ENCODE measurements at regions of chr17 and their contacts with region 1.

Region 1: GRCh38 chr17:65231662-65232335 is 94.6 kb downstream of the RGS9 start:
- DNase-seq: peak; percentile 76 to 94
- ATAC-seq: peak; percentile 89 to 96
- H3K4me3 ChIP-seq: no peak overlapping the region
- H3K27ac ChIP-seq: no peak overlapping the region
- H3K4me1 ChIP-seq: no peaks in the 10 kb centered on the region
- CTCF ChIP-seq: peak; percentile 89
- EP300 ChIP-seq: no peak
- POLR2A ChIP-seq: no peak
- RAD21 ChIP-seq: peak; percentile 95 to 97

Region 2: GRCh38 chr17:65219124-65219523 is 12.7 kb before region 1 on chr17:
- CTCF ChIA-PET with region 1: interaction called, 77 read pairs
- POLR2A ChIA-PET with region 1: no interaction called
- DNase-seq: peak in 1 of 2 experiments; percentile 19
- ATAC-seq: peak in 1 of 2 experiments; percentile 55; a peak in 2 of 6 replicates
- H3K4me3 ChIP-seq: no peak overlapping the region
- H3K27ac ChIP-seq: no peak overlapping the region
- H3K4me1 ChIP-seq: 0 out of 3 replicates have a peak, but pooled peaks cover 2% of the 10 kb centered on the region
- CTCF ChIP-seq: peak; percentile 20; the same call in 2 of the 3 replicates
- EP300 ChIP-seq: no peak
- POLR2A ChIP-seq: no peak
- RAD21 ChIP-seq: peak in 1 of 2 experiments; percentile 21; a peak in 2 of 5 replicates

Region 3: GRCh38 chr17:65249774-65250173 is 18.0 kb after region 1 on chr17:
- CTCF ChIA-PET with region 1: interaction called, 12 read pairs
- POLR2A ChIA-PET with region 1: no interaction called
- DNase-seq: peak in 1 of 2 experiments; percentile 19
- ATAC-seq: no peak; a peak in 1 of 6 replicates
- H3K4me3 ChIP-seq: no peak overlapping the region
- H3K27ac ChIP-seq: no peak overlapping the region
- H3K4me1 ChIP-seq: 0 out of 3 replicates have a peak, but pooled peaks cover 5% of the 10 kb centered on the region
- CTCF ChIP-seq: no peak
- EP300 ChIP-seq: no peak
- POLR2A ChIP-seq: no peak
- RAD21 ChIP-seq: no peak

Region 4: GRCh38 chr17:65268832-65269231 is 37.0 kb after region 1 on chr17:
- CTCF ChIA-PET with region 1: interaction called, 11 read pairs
- POLR2A ChIA-PET with region 1: no interaction called
- DNase-seq: no peak
- ATAC-seq: no peak
- H3K4me3 ChIP-seq: no peak overlapping the region
- H3K27ac ChIP-seq: no peak overlapping the region
- H3K4me1 ChIP-seq: no peaks in the 10 kb centered on the region
- CTCF ChIP-seq: no peak
- EP300 ChIP-seq: no peak
- POLR2A ChIP-seq: no peak
- RAD21 ChIP-seq: no peak

Region 5: GRCh38 chr17:66165513-66166123 is 933.8 kb after region 1 on chr17:
- CTCF ChIA-PET with region 1: interaction called, 128 read pairs
- POLR2A ChIA-PET with region 1: no interaction called
- DNase-seq: peak; percentile 65 to 72
- ATAC-seq: peak; percentile 68 to 81; a peak in 4 of 6 replicates
- H3K4me3 ChIP-seq: no peak overlapping the region
- H3K27ac ChIP-seq: no peak overlapping the region
- H3K4me1 ChIP-seq: no peaks in the 10 kb centered on the region
- CTCF ChIP-seq: peak; percentile 96
- EP300 ChIP-seq: no peak
- POLR2A ChIP-seq: no peak
- RAD21 ChIP-seq: peak; percentile 95 to 98

Measured in A549 (cell line).